Mammary epithelial cell (primary cell): ENCODE measurements at regions of chr3 and their contacts with region 1.

Region 1: GRCh38 chr3:172256101-172256734 is 192.0 kb downstream of the GHSR start:
- DNase-seq: no peak
- H3K4me3 ChIP-seq: no peak overlapping the region
- H3K27ac ChIP-seq: no peak overlapping the region
- H3K4me1 ChIP-seq: peaks cover 15% of the 10 kb centered on the region
- H3K27me3 ChIP-seq: no peaks in the 10 kb centered on the region
- CTCF ChIP-seq: no peak

Region 2: DNA sequence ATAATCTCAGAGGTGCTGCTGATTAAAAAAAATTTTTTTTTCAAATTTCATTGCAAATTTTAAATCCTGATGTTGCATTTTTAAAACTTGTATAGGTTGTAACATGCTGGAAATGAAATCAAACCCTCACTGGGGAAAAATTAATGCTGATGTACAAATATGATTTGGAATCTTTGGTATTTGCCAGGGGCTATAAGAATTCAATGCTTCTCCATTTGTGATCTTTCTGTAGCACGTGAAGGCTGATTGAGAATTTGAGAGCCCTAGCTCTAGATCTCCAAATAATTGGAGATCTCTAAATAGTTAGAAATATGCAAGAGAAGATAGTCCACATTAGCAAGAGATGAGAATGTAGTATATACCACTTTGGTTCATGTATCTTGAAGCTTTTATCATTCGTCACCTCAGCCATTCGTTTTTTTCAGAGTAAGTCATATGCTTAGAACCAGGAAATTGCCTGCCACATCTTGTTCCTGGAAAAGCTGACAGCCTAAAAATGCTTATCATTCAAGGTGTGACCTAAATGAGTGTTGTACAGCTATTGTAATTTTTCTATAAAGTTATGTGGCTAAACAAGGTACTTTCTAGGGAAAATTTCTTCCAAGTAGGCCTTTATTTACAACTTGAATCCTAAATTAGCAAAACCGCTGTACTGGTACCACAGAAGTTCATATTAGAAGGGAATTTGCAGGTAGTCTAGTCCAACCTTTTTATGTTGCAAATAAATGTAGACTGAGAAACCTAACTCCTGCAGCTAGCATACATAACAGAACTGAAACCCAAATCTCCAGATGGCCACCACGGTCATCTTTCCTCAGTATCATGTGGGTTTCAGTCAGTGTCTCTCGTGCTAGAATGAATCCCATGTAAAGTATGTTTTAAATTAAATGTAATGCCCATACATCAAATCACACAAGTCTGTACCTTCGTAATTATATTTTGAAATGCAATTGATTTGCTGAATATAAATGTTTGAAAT is 168.3 kb before region 1 on chr3:
- CTCF ChIA-PET with region 1: no interaction called
- dilution Hi-C with region 1: no loop called
- in situ Hi-C with region 1: no loop called
- intact Hi-C with region 1: no loop called
- DNase-seq: peak; percentile 57
- H3K4me3 ChIP-seq: peak overlapping the region in 1 of 3 experiments; percentile 29
- H3K27ac ChIP-seq: peak overlapping the region; percentile 85
- H3K4me1 ChIP-seq: peaks cover 41% of the 10 kb centered on the region
- H3K27me3 ChIP-seq: no peaks in the 10 kb centered on the region
- CTCF ChIP-seq: no peak

Region 3: GRCh38 chr3:172221547-172221946 is 34.7 kb before region 1 on chr3:
- CTCF ChIA-PET with region 1: no interaction called
- dilution Hi-C with region 1: loop called (anchors 5 kb)
- in situ Hi-C with region 1: no loop called
- intact Hi-C with region 1: no loop called
- DNase-seq: peak; percentile 79
- H3K4me3 ChIP-seq: no peak overlapping the region
- H3K27ac ChIP-seq: peak overlapping the region; percentile 18
- H3K4me1 ChIP-seq: peaks cover 37% of the 10 kb centered on the region
- H3K27me3 ChIP-seq: no peaks in the 10 kb centered on the region
- CTCF ChIP-seq: no peak